ENCODE measurements at regions of chr12 and their contacts with region 1.

Region 1: GRCh38 chr12:40031965-40032364 is 73.9 kb downstream of the SLC2A13 start:
- H3K4me3 ChIP-seq: no peak overlapping the region
- H3K27ac ChIP-seq: no peak overlapping the region
- H3K4me1 ChIP-seq: no peaks in the 10 kb centered on the region
- CTCF ChIP-seq: no peak

Region 2: GRCh38 chr12:40010899-40011774 is 20.8 kb before region 1 on chr12:
- CTCF ChIA-PET with region 1: interaction called, 15 read pairs
- POLR2A ChIA-PET with region 1: no interaction called
- H3K4me3 ChIP-seq: no peak overlapping the region
- H3K27ac ChIP-seq: no peak overlapping the region
- H3K4me1 ChIP-seq: no peaks in the 10 kb centered on the region
- CTCF ChIP-seq: peak; percentile 22; the same call in 1 of the 2 replicates

Measured in HEK293 (cell line).